ENCODE measurements at regions of chr14 and their contacts with region 1.

Region 1: GRCh38 chr14:35201066-35201465 is 78.7 kb downstream of the PRORP start:
- DNase-seq: no peak
- H3K4me3 Mint-ChIP-seq: peak overlapping the region; percentile 56
- H3K27ac Mint-ChIP-seq: peak overlapping the region; percentile 77
- H3K4me1 Mint-ChIP-seq: peaks cover 32% of the 10 kb centered on the region
- H3K27me3 Mint-ChIP-seq: no peaks in the 10 kb centered on the region

Region 2: GRCh38 chr14:35134328-35135123 is 66.5 kb before region 1 on chr14:
- intact Hi-C with region 1: no loop called
- DNase-seq: no peak
- H3K4me3 Mint-ChIP-seq: no peak overlapping the region
- H3K27ac Mint-ChIP-seq: no peak overlapping the region
- H3K4me1 Mint-ChIP-seq: peaks cover 11% of the 10 kb centered on the region
- H3K27me3 Mint-ChIP-seq: no peaks in the 10 kb centered on the region

Region 3: DNA sequence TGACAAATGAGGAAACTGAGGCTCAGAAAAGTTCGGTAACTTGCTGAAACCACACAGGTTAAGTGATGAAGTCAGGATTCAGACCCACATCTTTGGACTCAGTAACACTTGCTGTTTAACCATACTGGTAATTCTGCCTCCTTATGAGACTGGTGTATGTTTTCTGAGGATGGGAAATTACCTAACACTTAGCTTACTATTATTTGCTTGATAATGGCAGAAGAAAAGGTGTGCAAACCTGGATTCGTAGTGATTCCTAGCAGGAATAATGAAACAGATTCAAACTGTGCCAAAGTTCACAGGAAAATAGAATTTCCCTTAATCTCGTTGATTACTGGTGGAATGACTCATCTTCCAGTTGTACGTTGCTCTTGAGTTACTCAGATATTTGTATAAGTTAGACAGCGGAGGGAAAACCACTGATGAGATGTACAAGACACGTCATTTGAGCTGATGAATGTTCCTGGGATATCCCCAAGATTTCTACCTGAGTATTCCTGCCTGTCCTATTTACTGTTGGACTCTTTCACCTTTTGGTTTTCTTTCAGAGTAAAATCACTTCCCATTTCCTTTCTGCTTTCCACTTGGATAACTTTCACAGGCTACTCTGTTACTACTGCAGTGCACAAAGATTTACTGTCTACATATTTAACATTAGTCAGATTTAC is 41.2 kb before region 1 on chr14:
- intact Hi-C with region 1: loop called (anchors 2 kb)
- DNase-seq: no peak
- H3K4me3 Mint-ChIP-seq: peak overlapping the region; percentile 1
- H3K27ac Mint-ChIP-seq: peak overlapping the region; percentile 72
- H3K4me1 Mint-ChIP-seq: peaks cover 49% of the 10 kb centered on the region
- H3K27me3 Mint-ChIP-seq: no peaks in the 10 kb centered on the region

Region 4: DNA sequence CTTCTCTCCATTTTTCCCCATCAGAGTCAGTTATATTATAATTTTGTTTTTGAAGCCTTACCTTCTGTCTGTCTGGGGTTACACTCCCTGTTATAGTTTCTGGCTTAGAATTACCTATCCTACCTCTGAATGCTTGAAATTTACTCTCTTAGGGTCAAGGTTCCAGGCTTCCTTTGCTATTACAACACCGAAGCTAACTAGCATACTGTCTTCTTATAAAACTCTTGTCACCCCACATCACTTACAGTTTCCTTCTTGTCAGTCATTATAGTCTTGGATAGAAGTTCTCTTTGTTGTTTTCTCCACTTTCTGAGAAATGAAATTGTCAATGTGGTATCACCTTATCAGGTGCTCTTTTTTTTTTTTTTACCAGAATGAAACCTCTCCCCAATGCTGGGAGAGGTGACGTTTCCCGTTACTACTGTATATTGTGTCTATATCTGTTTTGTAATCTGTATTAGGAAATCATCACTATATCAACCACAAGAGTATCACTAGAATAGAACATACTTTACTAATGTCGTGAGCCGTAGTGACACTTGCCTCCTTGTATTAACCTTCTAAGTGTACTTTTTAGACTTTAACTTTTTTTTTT is 21.9 kb after region 1 on chr14:
- intact Hi-C with region 1: loop called (anchors 2 kb)
- DNase-seq: no peak
- H3K4me3 Mint-ChIP-seq: no peak overlapping the region
- H3K27ac Mint-ChIP-seq: no peak overlapping the region
- H3K4me1 Mint-ChIP-seq: peaks cover 10% of the 10 kb centered on the region
- H3K27me3 Mint-ChIP-seq: no peaks in the 10 kb centered on the region

Region 5: GRCh38 chr14:35254736-35255135 is 53.7 kb after region 1 on chr14:
- intact Hi-C with region 1: loop called (anchors 5 kb)
- DNase-seq: peak; percentile 66
- H3K4me3 Mint-ChIP-seq: peak overlapping the region; percentile 41
- H3K27ac Mint-ChIP-seq: peak overlapping the region; percentile 80
- H3K4me1 Mint-ChIP-seq: peaks cover 38% of the 10 kb centered on the region
- H3K27me3 Mint-ChIP-seq: no peaks in the 10 kb centered on the region

Region 6: DNA sequence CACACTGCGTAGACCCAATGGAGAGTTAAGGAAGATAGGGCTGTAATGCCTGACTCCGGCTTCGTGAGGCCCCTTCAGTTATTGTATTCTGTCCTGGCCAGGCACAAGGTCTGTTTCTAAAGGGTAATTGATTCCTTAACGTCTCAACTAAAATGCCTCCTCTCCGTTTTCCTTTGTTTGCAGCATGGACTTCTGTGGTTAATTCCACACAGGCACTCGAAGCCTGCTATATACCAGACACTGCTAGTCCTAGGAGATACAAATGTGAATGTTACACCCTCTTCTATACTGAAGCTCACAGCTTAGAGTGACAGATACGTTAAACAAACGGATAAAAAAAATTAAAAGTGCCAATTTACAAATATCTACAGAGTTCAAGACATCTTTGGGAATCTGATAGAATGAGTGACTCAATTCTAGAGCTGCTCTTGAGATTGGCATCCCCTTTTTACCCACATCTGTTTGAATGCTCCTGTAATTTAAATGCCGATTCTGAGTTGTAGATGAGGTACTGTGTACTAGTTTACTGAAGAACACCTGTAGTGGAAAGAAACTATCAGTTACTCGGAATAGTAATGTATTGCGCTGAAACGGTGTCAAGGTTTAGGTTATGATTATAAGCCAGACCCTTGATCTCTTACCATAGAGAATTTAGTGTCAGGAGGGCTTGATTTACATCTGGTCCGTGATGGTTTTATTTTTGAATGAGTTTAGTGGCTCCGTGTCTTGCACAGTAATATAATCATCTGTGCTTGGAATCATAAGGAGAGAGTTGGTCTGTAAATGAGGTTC is 91.9 kb after region 1 on chr14:
- intact Hi-C with region 1: no loop called
- DNase-seq: no peak
- H3K4me3 Mint-ChIP-seq: peak overlapping the region; percentile 100
- H3K27ac Mint-ChIP-seq: peak overlapping the region; percentile 98
- H3K4me1 Mint-ChIP-seq: peaks cover 46% of the 10 kb centered on the region
- H3K27me3 Mint-ChIP-seq: no peaks in the 10 kb centered on the region